ENCODE measurements at regions of chr3 and their contacts with region 1.

Region 1: GRCh38 chr3:52278510-52279069 is at the start of gene WDR82:
- DNase-seq: peak; percentile 70 to 91
- ATAC-seq: peak; percentile 91 to 92
- H3K4me3 ChIP-seq: peak within 1 kb of the TSS; percentile 73
- H3K27ac ChIP-seq: peak within 1 kb of the TSS; percentile 98
- H3K4me1 ChIP-seq: peaks cover 45% of the 10 kb centered on the region
- CTCF ChIP-seq: no peak
- EP300 ChIP-seq: no peak
- POLR2A ChIP-seq: peak; percentile 88
- RAD21 ChIP-seq: no peak
- polyA plus RNA-seq, gene WDR82: 52.7 and 58.5 TPM in 2 replicates

Region 2: GRCh38 chr3:52238761-52239701 is 39.6 kb before region 1 on chr3 and contains the start of gene TWF2:
- CTCF ChIA-PET with region 1: interaction called, 7 read pairs
- POLR2A ChIA-PET with region 1: interaction called, 28 read pairs
- DNase-seq: peak; percentile 59 to 80
- ATAC-seq: peak; percentile 70 to 83
- H3K4me3 ChIP-seq: peak within 1 kb of the TSS; percentile 96
- H3K27ac ChIP-seq: peak within 1 kb of the TSS; percentile 98
- H3K4me1 ChIP-seq: peaks cover 32% of the 10 kb centered on the region
- CTCF ChIP-seq: 0 out of 3 replicates have a peak, but pooled peaks have one; percentile 15
- EP300 ChIP-seq: no peak
- POLR2A ChIP-seq: peak; percentile 81
- RAD21 ChIP-seq: no peak
- polyA plus RNA-seq, gene TWF2: 36.8 and 46.3 TPM in 2 replicates

Region 3: GRCh38 chr3:52245322-52246263 is 33.0 kb before region 1 on chr3 and contains the start of gene PPM1M:
- CTCF ChIA-PET with region 1: interaction called, 8 read pairs
- POLR2A ChIA-PET with region 1: interaction called, 10 read pairs
- DNase-seq: peak; percentile 35 to 46
- ATAC-seq: peak; percentile 57 to 75
- H3K4me3 ChIP-seq: peak within 1 kb of the TSS; percentile 71
- H3K27ac ChIP-seq: peak within 1 kb of the TSS; percentile 83 to 93
- H3K4me1 ChIP-seq: peaks cover 8% of the 10 kb centered on the region
- CTCF ChIP-seq: no peak
- EP300 ChIP-seq: no peak
- POLR2A ChIP-seq: peak; percentile 19
- RAD21 ChIP-seq: no peak
- polyA plus RNA-seq, gene PPM1M: 6.3 and 8.8 TPM in 2 replicates

Region 4: GRCh38 chr3:52259448-52259847 is 19.1 kb before region 1 on chr3:
- CTCF ChIA-PET with region 1: interaction called, 10 read pairs
- POLR2A ChIA-PET with region 1: no interaction called
- DNase-seq: no peak
- ATAC-seq: no peak
- H3K4me3 ChIP-seq: no peak overlapping the region
- H3K27ac ChIP-seq: no peak overlapping the region
- H3K4me1 ChIP-seq: no peaks in the 10 kb centered on the region
- CTCF ChIP-seq: no peak
- EP300 ChIP-seq: no peak
- POLR2A ChIP-seq: no peak
- RAD21 ChIP-seq: no peak

Region 5: GRCh38 chr3:52291508-52292181 is 13.1 kb after region 1 on chr3:
- CTCF ChIA-PET with region 1: interaction called, 18 read pairs
- POLR2A ChIA-PET with region 1: interaction called, 30 read pairs
- DNase-seq: no peak
- ATAC-seq: peak in 1 of 2 experiments; percentile 39; a peak in 3 of 6 replicates
- H3K4me3 ChIP-seq: no peak overlapping the region
- H3K27ac ChIP-seq: no peak overlapping the region
- H3K4me1 ChIP-seq: peaks cover 20% of the 10 kb centered on the region
- CTCF ChIP-seq: peak; percentile 63
- EP300 ChIP-seq: no peak
- POLR2A ChIP-seq: no peak
- RAD21 ChIP-seq: peak; percentile 79 to 82